ENCODE measurements at regions of chr12 and their contacts with region 1.

Region 1: DNA sequence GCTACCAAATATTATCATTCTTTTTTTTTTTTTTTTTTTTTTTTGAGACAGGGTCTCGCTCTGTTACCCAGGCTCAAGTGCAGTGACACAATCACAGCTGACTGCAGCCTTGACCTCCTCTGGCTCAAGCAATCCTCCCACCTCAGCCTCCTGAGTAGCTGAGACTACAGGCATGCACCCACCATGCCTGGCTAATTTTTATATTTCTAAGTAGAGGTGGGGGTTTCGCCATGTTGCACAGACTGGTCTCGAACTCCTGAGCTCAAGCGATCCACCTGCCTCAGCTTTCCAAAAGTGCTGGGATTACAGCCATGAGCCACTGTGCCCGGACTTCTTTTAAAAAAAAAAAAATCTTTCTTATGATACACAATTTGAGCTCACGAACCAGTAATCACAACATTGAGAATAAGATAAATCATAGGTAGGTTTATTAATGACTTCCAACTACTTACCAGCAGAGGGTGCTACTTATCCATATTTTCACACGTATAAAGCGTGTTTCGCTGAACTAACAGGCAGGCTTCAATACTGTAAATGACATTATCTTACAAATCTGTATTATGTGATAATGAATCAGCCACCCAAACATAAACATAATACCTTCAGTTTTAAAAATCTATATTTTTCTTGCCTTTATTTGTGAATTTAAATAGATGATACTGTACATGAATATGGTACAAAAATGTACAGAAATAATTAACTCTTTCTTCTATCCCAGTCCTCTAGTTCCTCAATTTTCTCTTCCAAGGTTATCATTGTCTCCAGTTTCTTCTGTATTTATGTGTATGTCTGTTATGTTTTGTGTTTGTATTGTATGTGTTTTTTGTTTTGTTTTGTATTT is 42.5 kb upstream of the BCAT1 start:
- DNase-seq: peak; percentile 39
- ATAC-seq: peak; percentile 85
- H3K4me3 ChIP-seq: no peak overlapping the region
- H3K27ac ChIP-seq: no peak overlapping the region
- H3K4me1 ChIP-seq: no peaks in the 10 kb centered on the region
- H3K27me3 ChIP-seq: no peaks in the 10 kb centered on the region; the same call in 1 of the 2 replicates
- CTCF ChIP-seq: peak; percentile 22 to 68 (median 59); a peak in 4 of 6 replicates
- POLR2A ChIP-seq: no peak
- RAD21 ChIP-seq: peak; percentile 76

Region 2: DNA sequence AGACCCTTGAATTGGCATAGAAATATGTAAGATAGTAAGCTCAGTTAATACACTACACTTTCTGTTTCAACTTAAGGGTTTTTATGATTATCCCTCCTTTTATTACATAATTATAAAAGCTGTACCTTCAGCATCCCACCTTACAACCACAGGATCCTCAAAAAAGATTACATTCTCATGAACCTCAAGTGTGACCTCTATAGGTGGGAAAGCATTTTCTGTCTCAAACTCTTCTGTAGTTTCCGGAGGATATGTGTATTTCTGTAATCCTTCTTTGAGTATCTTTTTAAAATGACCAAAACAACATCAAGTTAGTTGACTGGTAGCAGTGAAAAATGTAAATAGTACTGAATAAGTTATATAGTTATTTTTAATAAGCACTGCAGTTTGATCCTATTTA is 127.6 kb after region 1 on chr12:
- CTCF ChIA-PET with region 1: interaction called, 11 read pairs
- POLR2A ChIA-PET with region 1: no interaction called
- RAD21 ChIA-PET with region 1: no interaction called
- intact Hi-C with region 1: no loop called
- DNase-seq: no peak
- ATAC-seq: no peak
- H3K4me3 ChIP-seq: no peak overlapping the region
- H3K27ac ChIP-seq: no peak overlapping the region
- H3K4me1 ChIP-seq: no peaks in the 10 kb centered on the region
- H3K27me3 ChIP-seq: no peaks in the 10 kb centered on the region
- CTCF ChIP-seq: 0 out of 6 replicates have a peak, but pooled peaks of 2 of the 3 experiments have one; percentile 10 to 17
- POLR2A ChIP-seq: no peak
- RAD21 ChIP-seq: no peak

Region 3: DNA sequence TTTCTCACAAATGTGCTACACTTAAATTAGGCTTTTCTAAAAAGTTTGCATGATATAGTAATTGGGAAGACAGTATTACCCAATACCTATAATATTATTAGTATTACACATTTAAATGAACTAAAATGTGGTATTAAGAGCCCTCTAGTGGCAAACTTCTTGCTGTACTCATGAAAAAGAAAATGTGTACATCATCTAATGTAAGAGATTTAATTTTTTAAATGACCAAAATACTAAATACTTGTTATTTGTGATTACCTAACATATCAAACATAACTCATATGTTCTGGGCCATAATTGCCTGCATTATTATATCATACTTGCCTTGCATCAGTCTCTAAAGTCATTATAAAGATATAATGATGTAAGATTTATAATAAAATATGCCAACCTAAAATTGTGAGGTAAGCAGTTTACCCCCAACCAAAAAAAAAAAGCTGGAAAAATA is 139.3 kb after region 1 on chr12:
- CTCF ChIA-PET with region 1: interaction called, 17 read pairs
- POLR2A ChIA-PET with region 1: no interaction called
- RAD21 ChIA-PET with region 1: no interaction called
- intact Hi-C with region 1: loop called (anchors 1 kb)
- DNase-seq: peak; percentile 22
- ATAC-seq: no peak; the same call in 1 of the 2 replicates
- H3K4me3 ChIP-seq: no peak overlapping the region
- H3K27ac ChIP-seq: no peak overlapping the region
- H3K4me1 ChIP-seq: no peaks in the 10 kb centered on the region
- H3K27me3 ChIP-seq: no peaks in the 10 kb centered on the region
- CTCF ChIP-seq: peak; percentile 39 to 63 (median 49); a peak in 4 of 6 replicates
- POLR2A ChIP-seq: no peak
- RAD21 ChIP-seq: peak; percentile 67

Region 4: GRCh38 chr12:25156061-25156460 is 164.6 kb after region 1 on chr12:
- CTCF ChIA-PET with region 1: interaction called, 31 read pairs
- POLR2A ChIA-PET with region 1: no interaction called
- RAD21 ChIA-PET with region 1: no interaction called
- intact Hi-C with region 1: no loop called
- DNase-seq: no peak
- ATAC-seq: no peak
- H3K4me3 ChIP-seq: no peak overlapping the region
- H3K27ac ChIP-seq: no peak overlapping the region
- H3K4me1 ChIP-seq: no peaks in the 10 kb centered on the region
- H3K27me3 ChIP-seq: no peaks in the 10 kb centered on the region
- CTCF ChIP-seq: no peak
- POLR2A ChIP-seq: no peak
- RAD21 ChIP-seq: no peak

Region 5: GRCh38 chr12:25386831-25387731 is 395.7 kb after region 1 on chr12:
- CTCF ChIA-PET with region 1: interaction called, 10 read pairs
- POLR2A ChIA-PET with region 1: no interaction called
- RAD21 ChIA-PET with region 1: interaction called in 1 of 2 experiments, 3 read pairs
- intact Hi-C with region 1: loop called (anchors 1 kb)
- DNase-seq: peak; percentile 84
- ATAC-seq: peak; percentile 42
- H3K4me3 ChIP-seq: peak overlapping the region; percentile 76 to 79
- H3K27ac ChIP-seq: peak overlapping the region; percentile 92
- H3K4me1 ChIP-seq: peaks cover 12 to 31% of the 10 kb centered on the region in 2 experiments
- H3K27me3 ChIP-seq: no peaks in the 10 kb centered on the region
- CTCF ChIP-seq: peak; percentile 78 to 87 (median 79); a peak in 5 of 6 replicates
- POLR2A ChIP-seq: no peak
- RAD21 ChIP-seq: peak; percentile 93

Region 6: DNA sequence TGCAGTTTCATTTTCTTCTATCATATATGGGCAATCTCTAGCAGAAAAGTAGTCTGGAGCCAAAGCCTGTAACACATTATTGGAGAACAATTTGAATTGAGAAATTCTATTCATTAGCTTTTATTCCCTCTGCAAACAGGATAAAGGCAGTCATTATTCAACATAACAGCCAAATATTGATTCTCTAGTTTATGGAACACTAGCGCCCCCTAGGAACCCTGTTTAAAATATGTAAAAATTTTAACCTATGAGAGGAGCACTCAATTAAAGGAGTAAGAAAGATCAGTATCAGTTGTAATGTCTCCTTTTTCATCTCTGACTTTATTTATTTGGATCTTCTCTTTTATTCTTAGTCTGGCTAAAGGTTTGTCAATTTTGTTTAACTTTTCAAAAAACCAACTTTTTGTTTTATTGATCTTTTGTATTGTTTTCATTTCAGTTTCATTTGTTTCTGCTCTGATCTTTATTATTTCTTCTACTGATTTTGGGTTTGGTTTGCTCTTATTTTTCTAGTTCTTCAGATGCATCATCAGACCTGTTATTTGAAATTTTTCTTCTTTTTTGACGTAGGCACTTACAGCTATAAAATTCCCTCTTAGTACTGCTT is 566.5 kb after region 1 on chr12:
- CTCF ChIA-PET with region 1: no interaction called
- POLR2A ChIA-PET with region 1: no interaction called
- RAD21 ChIA-PET with region 1: no interaction called
- intact Hi-C with region 1: loop called (anchors 10 kb)
- DNase-seq: peak; percentile 54
- ATAC-seq: peak; percentile 49
- H3K4me3 ChIP-seq: no peak overlapping the region
- H3K27ac ChIP-seq: no peak overlapping the region
- H3K4me1 ChIP-seq: no peaks in the 10 kb centered on the region
- H3K27me3 ChIP-seq: no peaks in the 10 kb centered on the region
- CTCF ChIP-seq: peak; percentile 60 to 73 (median 60); a peak in 5 of 6 replicates
- POLR2A ChIP-seq: no peak
- RAD21 ChIP-seq: peak; percentile 73

Region 7: DNA sequence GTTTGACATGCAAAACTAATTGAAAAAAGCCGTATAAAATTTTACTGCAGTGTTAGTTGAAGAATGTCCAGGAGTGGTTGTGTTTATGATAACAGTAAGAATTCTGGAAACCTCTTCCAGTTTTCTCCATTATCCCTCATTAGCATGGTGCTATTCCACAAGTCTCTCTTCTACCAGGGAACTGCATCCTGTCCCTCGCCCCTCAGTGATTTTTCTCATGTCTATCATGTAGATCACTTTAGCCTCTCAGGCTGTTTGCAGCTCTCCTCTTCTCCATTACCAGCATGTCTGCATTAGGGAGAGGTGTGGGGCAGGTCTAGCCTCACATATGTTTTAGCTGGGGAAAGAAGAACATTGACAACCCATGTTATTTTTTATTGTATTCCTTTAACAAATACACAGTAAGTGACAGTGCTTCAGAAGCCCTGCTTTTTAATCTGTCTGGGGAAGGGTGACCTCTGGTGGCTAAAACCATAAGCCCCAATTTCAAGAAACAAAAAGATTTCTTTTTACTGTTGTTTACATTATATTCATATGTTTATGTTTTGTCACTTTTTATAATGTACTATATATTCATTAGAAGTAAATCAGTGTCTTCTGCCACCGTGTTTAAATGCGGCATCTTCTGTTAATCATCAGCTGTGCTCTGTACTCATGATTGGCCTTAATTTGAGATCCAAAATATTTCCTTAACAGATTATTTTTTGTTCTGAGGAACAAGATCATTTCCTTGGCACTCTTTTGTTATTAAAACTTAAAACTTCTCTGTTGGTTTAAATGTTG is 1037.7 kb after region 1 on chr12:
- CTCF ChIA-PET with region 1: no interaction called
- POLR2A ChIA-PET with region 1: no interaction called
- RAD21 ChIA-PET with region 1: no interaction called
- intact Hi-C with region 1: loop called (anchors 10 kb)
- DNase-seq: peak; percentile 40
- ATAC-seq: peak; percentile 68
- H3K4me3 ChIP-seq: no peak overlapping the region
- H3K27ac ChIP-seq: no peak overlapping the region
- H3K4me1 ChIP-seq: no peaks in the 10 kb centered on the region
- H3K27me3 ChIP-seq: no peaks in the 10 kb centered on the region
- CTCF ChIP-seq: peak; percentile 65 to 82 (median 70)
- POLR2A ChIP-seq: no peak
- RAD21 ChIP-seq: peak; percentile 78

Measured in HCT116 (cell line).